H1 (cell line): ENCODE measurements at regions of chr22 and their contacts with region 1.

Region 1: DNA sequence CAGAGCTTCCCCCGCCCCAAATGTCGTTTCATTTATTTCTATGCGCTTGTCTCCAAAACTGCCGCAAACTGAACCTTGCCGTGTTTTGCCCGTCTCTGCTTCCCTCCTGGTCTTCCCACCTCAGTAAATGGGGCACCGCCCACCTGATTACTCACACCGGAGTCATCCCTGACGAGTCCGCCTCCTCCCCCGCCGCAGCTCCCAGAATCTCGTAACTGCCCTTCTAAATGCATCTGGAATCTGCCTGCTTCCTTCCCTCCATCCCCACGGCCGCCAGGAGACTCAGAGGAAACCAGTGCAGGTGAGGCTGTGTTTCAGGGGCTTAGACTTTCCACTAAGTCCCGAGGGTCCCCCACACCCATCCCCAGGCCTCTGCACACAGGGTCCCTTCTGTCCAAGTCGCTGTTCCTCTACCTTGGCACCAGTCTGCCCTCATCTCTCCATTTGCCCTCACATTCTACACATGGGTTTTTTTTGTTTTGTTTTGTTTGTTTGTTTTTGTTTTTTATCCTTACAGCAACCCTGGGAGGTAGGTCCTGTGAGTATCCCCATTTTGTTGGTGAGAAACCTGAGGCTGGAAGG is 62.6 kb upstream of the PHF21B start:
- DNase-seq: peak in 1 of 2 experiments; percentile 84
- H3K4me3 ChIP-seq: peak overlapping the region in 2 of 4 experiments; percentile 10 to 39; a peak in 2 of 8 replicates
- H3K27ac ChIP-seq: no peak overlapping the region
- H3K4me1 ChIP-seq: peaks cover 8 to 17% (median 12%) of the 10 kb centered on the region in 4 experiments
- H3K27me3 ChIP-seq: no peaks in the 10 kb centered on the region; a peak in 2 of 7 replicates
- CTCF ChIP-seq: no peak
- EP300 ChIP-seq: no peak
- POLR2A ChIP-seq: no peak
- RAD21 ChIP-seq: no peak

Region 2: DNA sequence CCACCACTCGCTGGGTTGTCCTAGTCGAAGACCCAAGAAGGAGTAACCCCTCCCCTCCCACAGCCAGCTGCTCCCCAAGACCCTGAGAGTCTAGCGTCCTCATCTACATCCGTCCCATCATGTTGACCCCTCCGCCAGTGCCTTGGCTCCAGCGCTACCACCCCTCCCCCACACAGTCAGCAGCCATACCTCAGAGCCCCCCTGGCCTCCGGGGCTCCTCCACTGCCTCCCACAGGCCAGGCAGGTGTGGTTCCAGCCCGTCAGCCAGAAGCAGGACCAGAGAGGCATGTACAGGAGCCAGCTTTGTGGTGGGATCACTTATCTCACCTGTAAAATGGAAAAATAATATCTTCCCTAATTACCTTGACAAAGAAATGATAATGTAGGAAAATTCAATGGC is 11.1 kb before region 1 on chr22:
- CTCF ChIA-PET with region 1: interaction called, 10 read pairs
- POLR2A ChIA-PET with region 1: interaction called, 9 read pairs
- DNase-seq: no peak
- H3K4me3 ChIP-seq: no peak overlapping the region
- H3K27ac ChIP-seq: no peak overlapping the region
- H3K4me1 ChIP-seq: peaks cover 0 to 5% (median 0%) of the 10 kb centered on the region in 4 experiments; a peak in 1 of 7 replicates
- H3K27me3 ChIP-seq: 0 out of 7 replicates have a peak, but pooled peaks cover 0 to 2% (median under 1%) of the 10 kb centered on the region in 4 experiments
- CTCF ChIP-seq: peak; percentile 22 to 41 (median 28); a peak in 3 of 4 replicates
- EP300 ChIP-seq: no peak
- POLR2A ChIP-seq: no peak
- RAD21 ChIP-seq: peak; percentile 23 to 62; a peak in 2 of 4 replicates